ENCODE measurements at regions of chr22 and their contacts with region 1.

Region 1: DNA sequence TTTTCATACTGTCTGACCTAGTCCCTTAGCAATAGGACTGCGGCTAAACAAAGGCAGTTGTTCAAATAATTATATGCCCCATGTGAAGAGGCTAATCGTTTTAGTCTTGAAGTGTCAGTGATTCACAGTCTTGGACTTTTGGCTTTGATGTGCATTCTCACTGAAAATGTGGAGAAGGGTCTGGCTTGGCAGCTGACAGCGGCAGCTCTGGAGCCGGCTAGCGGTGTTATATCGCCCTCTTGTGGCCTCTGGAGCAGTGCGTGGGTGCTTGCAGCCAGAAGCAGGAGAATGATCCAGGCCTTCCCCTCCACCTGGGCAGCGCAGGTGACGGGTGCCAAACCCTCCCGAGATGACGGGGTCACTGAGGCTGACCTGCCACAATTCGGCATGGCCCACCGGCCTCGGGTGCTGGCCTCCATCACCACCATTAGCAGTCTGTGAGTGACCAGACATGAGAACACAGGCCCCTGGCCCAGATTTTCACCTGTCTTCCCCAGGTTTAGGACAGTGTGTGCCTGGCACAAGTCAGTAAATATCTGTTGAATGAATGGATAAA is 90.3 kb upstream of the PITPNB start:
- DNase-seq: peak; percentile 75
- ATAC-seq: peak; percentile 96
- H3K4me3 ChIP-seq: no peak overlapping the region
- H3K27ac ChIP-seq: no peak overlapping the region
- H3K4me1 ChIP-seq: no peaks in the 10 kb centered on the region
- H3K27me3 ChIP-seq: no peaks in the 10 kb centered on the region
- CTCF ChIP-seq: peak; percentile 87

Region 2: GRCh38 chr22:27880778-27881394 is 128.5 kb before region 1 on chr22:
- CTCF ChIA-PET with region 1: no interaction called
- POLR2A ChIA-PET with region 1: no interaction called
- intact Hi-C with region 1: loop called (anchors 1 kb)
- DNase-seq: peak; percentile 72
- ATAC-seq: peak; percentile 58
- H3K4me3 ChIP-seq: no peak overlapping the region
- H3K27ac ChIP-seq: no peak overlapping the region
- H3K4me1 ChIP-seq: peaks cover 2% of the 10 kb centered on the region; the same call in 1 of the 2 replicates
- H3K27me3 ChIP-seq: no peaks in the 10 kb centered on the region
- CTCF ChIP-seq: peak; percentile 62

Region 3: GRCh38 chr22:27885977-27886842 is 123.1 kb before region 1 on chr22:
- CTCF ChIA-PET with region 1: no interaction called
- POLR2A ChIA-PET with region 1: no interaction called
- intact Hi-C with region 1: loop called (anchors 1 kb)
- DNase-seq: peak; percentile 50
- ATAC-seq: peak; percentile 67
- H3K4me3 ChIP-seq: no peak overlapping the region
- H3K27ac ChIP-seq: no peak overlapping the region
- H3K4me1 ChIP-seq: peaks cover 13% of the 10 kb centered on the region
- H3K27me3 ChIP-seq: no peaks in the 10 kb centered on the region
- CTCF ChIP-seq: peak; percentile 79

Measured in PC-3 (cell line).